HEK293T (cell line): ENCODE measurements at regions of chr1 and their contacts with region 1.

Region 1: DNA sequence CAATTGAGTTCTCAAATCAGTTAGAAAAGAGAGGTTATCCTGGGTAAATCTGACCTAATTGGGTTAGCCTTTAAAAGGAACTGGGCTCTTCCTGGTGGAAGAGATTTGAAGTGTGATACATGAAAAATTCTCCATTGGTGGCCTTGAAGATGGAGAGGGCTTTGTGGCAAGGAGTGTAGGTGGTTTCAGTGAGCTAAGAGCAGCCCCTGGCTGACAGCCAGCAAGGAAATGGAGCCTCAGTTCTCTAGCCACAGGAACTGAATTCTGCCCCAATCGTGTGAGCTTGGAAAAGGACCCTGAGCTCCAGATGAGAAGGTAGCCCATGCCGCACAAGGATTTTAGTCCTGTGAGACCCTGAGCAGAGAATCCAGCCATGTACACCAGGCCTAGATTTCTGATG is 12.7 kb upstream of the HYI start:
- DNase-seq: no peak

Region 2: DNA sequence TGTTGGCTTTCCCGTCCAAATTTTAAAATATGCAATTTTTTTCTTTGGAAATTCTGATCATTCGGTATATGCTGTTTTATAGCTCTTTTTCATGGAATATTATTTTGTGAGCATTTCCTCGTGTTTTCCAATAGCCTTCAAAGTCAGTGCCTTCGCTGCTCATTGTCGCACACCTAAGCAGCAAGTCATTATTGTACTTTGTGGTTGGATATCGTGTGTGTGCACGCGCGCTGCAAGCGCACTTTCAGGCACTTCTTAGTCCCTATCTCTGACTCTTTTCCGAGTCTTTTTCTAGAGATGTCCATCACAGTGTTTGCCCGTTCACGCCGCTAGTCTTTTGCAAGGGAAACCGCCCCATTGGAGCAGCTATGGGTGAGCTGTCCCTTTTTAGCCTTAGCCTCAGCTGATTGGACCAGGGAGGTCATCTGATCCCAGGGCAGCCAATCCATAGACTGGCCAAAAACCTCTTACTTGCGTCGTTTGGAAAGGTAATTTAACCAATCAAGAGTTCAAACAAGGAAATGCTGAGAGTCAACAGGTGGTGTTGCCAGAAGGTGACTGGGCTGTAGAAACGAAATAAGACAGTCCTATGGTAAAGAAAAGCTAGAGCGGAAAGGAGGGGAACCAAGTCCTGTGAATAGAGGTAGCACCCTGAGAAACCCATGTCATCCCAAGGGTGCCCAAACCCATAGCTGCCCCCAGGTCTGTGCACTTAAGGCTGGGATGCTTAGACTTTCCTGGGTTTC is 12.0 kb before region 1 on chr1:
- CTCF ChIA-PET with region 1: no interaction called
- POLR2A ChIA-PET with region 1: interaction called, 15 read pairs
- DNase-seq: peak; percentile 24